AG04450 (cell line): ENCODE measurements at regions of chr11 and their contacts with region 1.

Region 1: DNA sequence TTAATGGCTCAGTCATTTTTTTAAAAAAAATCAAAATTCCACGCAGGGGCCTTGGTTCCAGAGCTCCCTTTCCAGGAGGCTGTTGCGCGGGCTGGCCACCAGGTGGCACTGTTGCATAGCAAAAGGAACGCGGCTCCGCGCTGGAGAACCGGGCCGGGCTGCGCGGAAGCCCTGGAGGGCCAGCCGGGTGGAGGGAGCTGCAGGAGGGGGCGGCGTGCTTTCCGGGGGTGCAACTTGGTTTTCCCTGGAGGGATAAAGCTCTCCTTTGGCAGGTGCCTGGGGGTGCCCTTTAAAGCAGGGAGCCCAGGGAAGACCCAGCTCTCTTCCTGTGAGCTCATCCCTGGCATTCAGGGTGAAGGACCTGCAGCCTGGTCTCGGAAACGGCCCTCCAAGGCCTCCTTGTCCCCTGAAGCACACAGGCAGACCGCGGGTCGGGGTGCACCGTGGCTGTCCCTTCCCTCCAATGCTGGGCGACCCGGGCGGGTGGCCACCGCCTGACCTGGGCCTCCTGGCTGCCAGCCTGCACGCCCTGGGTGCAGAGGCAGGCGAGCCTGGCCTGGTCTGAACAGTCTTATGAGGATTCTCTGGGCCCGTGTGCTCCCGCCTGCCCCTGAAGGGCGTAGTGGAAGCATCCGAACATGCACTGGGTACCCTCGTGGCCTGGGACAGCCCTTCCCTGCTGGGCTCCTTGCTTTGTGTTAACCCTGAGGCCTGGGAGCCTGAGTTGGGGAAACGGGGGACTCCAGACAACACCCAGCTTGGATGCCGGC is 23.4 kb downstream of the KRTAP5-5 start:
- DNase-seq: peak; percentile 7
- H3K4me3 ChIP-seq: no peak overlapping the region
- H3K27ac ChIP-seq: no peak overlapping the region
- H3K27me3 ChIP-seq: peaks cover 39% of the 10 kb centered on the region
- CTCF ChIP-seq: peak; percentile 91

Region 2: DNA sequence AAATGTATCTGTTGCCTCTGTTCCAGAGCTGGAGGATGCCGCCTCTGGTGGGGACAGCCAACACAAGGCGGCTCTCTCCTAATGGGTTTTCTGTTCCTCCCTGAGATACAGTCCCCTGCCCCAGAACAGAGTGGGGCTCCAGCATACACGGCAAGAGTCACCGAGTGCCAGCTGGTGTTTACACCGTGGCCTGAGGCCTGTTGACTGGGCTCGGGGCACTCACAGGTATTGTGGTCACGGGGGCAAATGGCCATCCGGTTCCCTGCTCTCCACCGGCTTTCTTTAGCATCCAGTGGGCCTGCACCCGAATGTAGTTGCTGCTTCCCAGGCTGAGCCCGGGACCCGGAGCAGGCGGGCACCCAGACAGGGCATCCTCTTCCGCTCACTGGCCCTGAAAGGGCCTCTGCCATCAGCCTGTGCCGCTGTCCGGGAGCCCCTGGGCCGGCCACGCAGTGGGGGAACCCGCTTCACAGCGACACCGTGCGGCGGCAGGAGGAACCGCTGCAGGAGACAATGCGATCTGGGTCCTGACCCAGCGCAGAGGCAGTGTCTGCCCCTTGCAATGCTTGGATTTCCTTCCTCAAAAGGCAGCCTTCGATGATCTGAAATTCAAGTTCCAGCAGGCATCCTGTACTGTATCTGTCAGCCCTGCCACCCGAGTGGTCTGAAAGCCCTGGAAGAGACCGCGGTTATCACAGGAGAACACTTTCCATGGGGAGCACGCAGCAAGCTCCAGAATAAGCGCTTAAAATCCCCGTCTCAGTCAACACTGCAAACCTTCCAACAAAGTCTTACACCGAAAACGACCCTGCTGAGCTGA is 24.2 kb before region 1 on chr11:
- CTCF ChIA-PET with region 1: interaction called, 15 read pairs
- POLR2A ChIA-PET with region 1: no interaction called
- DNase-seq: no peak
- H3K4me3 ChIP-seq: no peak overlapping the region
- H3K27ac ChIP-seq: no peak overlapping the region
- H3K27me3 ChIP-seq: peaks cover 57% of the 10 kb centered on the region
- CTCF ChIP-seq: peak; percentile 86

Region 3: GRCh38 chr11:1674173-1675131 is 21.5 kb after region 1 on chr11:
- CTCF ChIA-PET with region 1: interaction called, 25 read pairs
- POLR2A ChIA-PET with region 1: no interaction called
- DNase-seq: no peak
- H3K4me3 ChIP-seq: no peak overlapping the region
- H3K27ac ChIP-seq: no peak overlapping the region
- H3K27me3 ChIP-seq: peaks cover 34% of the 10 kb centered on the region
- CTCF ChIP-seq: no peak

Region 4: GRCh38 chr11:1728931-1729691 is 76.2 kb after region 1 on chr11:
- CTCF ChIA-PET with region 1: interaction called, 10 read pairs
- POLR2A ChIA-PET with region 1: no interaction called
- DNase-seq: no peak
- H3K4me3 ChIP-seq: no peak overlapping the region
- H3K27ac ChIP-seq: no peak overlapping the region
- H3K27me3 ChIP-seq: peaks cover 23% of the 10 kb centered on the region
- CTCF ChIP-seq: no peak

Region 5: DNA sequence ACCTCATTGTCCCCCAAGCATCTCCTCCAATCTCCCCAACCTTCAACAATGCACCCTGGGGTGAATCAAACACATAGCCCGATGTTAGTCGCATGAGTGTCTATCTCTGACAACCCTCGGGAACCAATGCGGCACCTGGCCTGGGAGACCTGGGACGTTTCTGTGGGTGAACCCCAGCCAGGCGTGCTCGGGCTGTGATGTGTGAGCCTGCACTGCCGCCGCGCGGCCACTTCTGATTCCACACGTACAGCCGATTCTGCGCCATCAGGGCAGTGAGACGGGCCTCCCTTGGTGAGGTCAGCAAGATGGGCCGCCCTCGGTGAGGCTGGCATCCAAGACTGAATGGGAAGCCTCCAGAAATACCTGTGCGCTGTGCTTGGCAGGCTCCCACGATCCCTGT is 349.9 kb after region 1 on chr11:
- CTCF ChIA-PET with region 1: interaction called, 49 read pairs
- POLR2A ChIA-PET with region 1: no interaction called
- DNase-seq: no peak
- H3K4me3 ChIP-seq: no peak overlapping the region
- H3K27ac ChIP-seq: no peak overlapping the region
- H3K27me3 ChIP-seq: no peaks in the 10 kb centered on the region
- CTCF ChIP-seq: no peak

Region 6: DNA sequence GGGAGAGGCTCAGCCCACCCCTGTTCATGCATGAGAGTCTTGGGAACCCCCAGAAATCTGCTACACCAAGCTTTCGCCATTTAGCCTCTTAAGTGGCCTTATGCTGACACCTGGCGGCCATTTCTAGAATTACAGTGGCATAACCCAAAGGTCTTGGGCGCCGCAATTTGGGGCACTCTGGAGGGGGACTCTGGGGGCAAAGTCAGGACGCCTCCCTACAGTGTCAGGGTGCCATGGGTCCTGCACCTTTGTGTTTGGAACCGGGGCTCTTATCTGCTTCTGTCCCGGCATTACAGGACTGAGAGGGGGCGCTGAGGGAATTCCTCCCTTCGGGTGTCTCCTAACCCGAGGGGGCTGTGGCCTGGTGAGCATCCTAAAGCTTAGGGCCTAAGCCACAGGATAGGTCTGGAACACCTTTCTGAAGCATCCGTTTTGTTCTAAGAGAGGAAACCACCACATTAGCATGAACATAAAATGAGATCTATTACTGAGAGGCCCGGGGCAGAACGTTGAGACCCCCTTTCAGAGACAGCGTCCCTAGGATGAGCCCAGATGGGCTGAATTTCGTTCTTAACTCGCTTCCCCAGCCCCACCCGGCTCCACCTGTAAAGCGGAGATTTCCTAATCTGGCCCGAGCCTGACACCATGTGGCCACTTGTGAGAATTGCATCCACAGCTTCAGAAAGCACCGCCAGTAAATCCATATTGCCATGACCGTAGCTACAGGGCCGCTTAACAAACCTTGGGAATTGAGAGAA is 498.7 kb after region 1 on chr11:
- CTCF ChIA-PET with region 1: interaction called, 104 read pairs
- POLR2A ChIA-PET with region 1: interaction called, 4 read pairs
- DNase-seq: peak; percentile 27
- H3K4me3 ChIP-seq: no peak overlapping the region
- H3K27ac ChIP-seq: no peak overlapping the region
- H3K27me3 ChIP-seq: peaks cover 49% of the 10 kb centered on the region
- CTCF ChIP-seq: peak; percentile 78